WTC11 (cell line): ENCODE measurements at regions of chr15 and their contacts with region 1.

Region 1: DNA sequence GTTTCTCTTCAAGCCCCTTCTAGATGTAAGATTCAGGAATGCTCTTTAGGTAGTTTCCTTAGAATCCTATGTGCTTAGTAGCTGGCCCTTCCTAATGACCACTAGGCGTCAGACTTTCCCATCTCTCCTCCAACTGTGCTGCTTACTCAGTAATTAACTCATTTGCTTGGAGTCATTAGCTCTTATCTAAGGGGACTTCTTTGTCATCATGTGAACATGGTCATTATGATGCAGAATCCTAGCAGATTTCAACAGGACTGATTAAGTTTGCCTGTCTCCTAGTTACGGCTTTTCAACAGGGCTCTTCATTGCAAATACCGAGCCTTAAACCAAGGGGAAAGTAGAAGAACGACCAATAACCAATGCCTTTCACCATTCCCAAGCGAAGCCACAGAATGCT is 46.4 kb downstream of the GJD2 start:
- DNase-seq: no peak
- ATAC-seq: peak; percentile 90
- H3K4me3 Mint-ChIP-seq: no peak overlapping the region
- H3K27ac Mint-ChIP-seq: no peak overlapping the region
- H3K4me1 Mint-ChIP-seq: peaks cover 4% of the 10 kb centered on the region
- H3K27me3 Mint-ChIP-seq: no peaks in the 10 kb centered on the region
- CTCF ChIP-seq: peak; percentile 56

Region 2: GRCh38 chr15:34696506-34696905 is 11.9 kb before region 1 on chr15:
- CTCF ChIA-PET with region 1: interaction called, 18 read pairs
- POLR2A ChIA-PET with region 1: no interaction called
- DNase-seq: no peak
- ATAC-seq: no peak
- H3K4me3 Mint-ChIP-seq: no peak overlapping the region
- H3K27ac Mint-ChIP-seq: no peak overlapping the region
- H3K4me1 Mint-ChIP-seq: peaks cover 24% of the 10 kb centered on the region
- H3K27me3 Mint-ChIP-seq: no peaks in the 10 kb centered on the region; the same call in 1 of the 2 replicates
- CTCF ChIP-seq: no peak

Region 3: GRCh38 chr15:34721802-34722795 is 13.7 kb after region 1 on chr15:
- CTCF ChIA-PET with region 1: interaction called, 17 read pairs
- POLR2A ChIA-PET with region 1: no interaction called
- DNase-seq: peak; percentile 46
- ATAC-seq: peak; percentile 89
- H3K4me3 Mint-ChIP-seq: peak overlapping the region; percentile 60
- H3K27ac Mint-ChIP-seq: no peak overlapping the region
- H3K4me1 Mint-ChIP-seq: peaks cover 34% of the 10 kb centered on the region
- H3K27me3 Mint-ChIP-seq: no peaks in the 10 kb centered on the region; the same call in none of the 2 replicates
- CTCF ChIP-seq: no peak

Region 4: GRCh38 chr15:34753236-34753894 is 44.9 kb after region 1 on chr15:
- CTCF ChIA-PET with region 1: interaction called, 14 read pairs
- POLR2A ChIA-PET with region 1: no interaction called
- DNase-seq: peak; percentile 83
- ATAC-seq: peak; percentile 69
- H3K4me3 Mint-ChIP-seq: peak overlapping the region; percentile 69; the same call in 1 of the 2 replicates
- H3K27ac Mint-ChIP-seq: no peak overlapping the region
- H3K4me1 Mint-ChIP-seq: peaks cover 10% of the 10 kb centered on the region
- H3K27me3 Mint-ChIP-seq: peaks cover 81% of the 10 kb centered on the region
- CTCF ChIP-seq: no peak

Region 5: GRCh38 chr15:34914317-34914716 is 205.9 kb after region 1 on chr15:
- CTCF ChIA-PET with region 1: interaction called, 14 read pairs
- POLR2A ChIA-PET with region 1: no interaction called
- DNase-seq: no peak
- ATAC-seq: no peak
- H3K4me3 Mint-ChIP-seq: no peak overlapping the region
- H3K27ac Mint-ChIP-seq: no peak overlapping the region
- H3K4me1 Mint-ChIP-seq: no peaks in the 10 kb centered on the region
- H3K27me3 Mint-ChIP-seq: no peaks in the 10 kb centered on the region
- CTCF ChIP-seq: no peak

Region 6: DNA sequence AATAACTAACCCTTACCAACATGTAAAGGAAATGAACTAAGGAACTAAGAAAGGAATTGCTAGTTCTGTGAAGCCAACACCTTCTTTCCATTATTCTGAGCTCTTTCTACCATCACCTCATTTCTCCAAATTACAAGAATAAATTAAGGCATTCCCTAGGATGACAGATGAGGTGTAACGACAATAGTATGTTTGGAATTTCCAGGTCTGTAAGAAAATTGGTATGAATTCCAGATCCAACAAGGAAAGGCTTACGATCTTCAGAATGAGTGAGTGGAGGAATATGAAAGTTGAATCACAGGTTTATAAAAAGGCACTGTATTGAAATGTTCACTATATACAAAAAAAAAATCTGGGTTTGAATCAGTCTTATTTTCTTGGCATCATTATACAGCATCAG is 381.1 kb after region 1 on chr15:
- CTCF ChIA-PET with region 1: no interaction called
- POLR2A ChIA-PET with region 1: no interaction called
- DNase-seq: no peak
- ATAC-seq: no peak
- H3K4me3 Mint-ChIP-seq: no peak overlapping the region
- H3K27ac Mint-ChIP-seq: no peak overlapping the region
- H3K4me1 Mint-ChIP-seq: peaks cover 19% of the 10 kb centered on the region
- H3K27me3 Mint-ChIP-seq: peaks cover 3% of the 10 kb centered on the region; the same call in 1 of the 2 replicates
- CTCF ChIP-seq: no peak